ENCODE measurements at regions of chr12 and their contacts with region 1.

Region 1: GRCh38 chr12:2794736-2795289 is at the start of gene FKBP4:
- DNase-seq: peak; percentile 65 to 95
- H3K4me3 ChIP-seq: peak within 1 kb of the TSS; percentile 82 to 84
- H3K27ac ChIP-seq: peak within 1 kb of the TSS; percentile 64 to 88
- H3K4me1 ChIP-seq: peaks cover 13 to 19% of the 10 kb centered on the region in 2 donors
- H3K27me3 ChIP-seq: no peaks in the 10 kb centered on the region
- CTCF ChIP-seq: no peak
- total RNA-seq, gene FKBP4: 36.3 TPM

Region 2: GRCh38 chr12:2636741-2637340 is 158.0 kb before region 1 on chr12:
- intact Hi-C with region 1: no loop called
- DNase-seq: no peak
- H3K4me3 ChIP-seq: no peak overlapping the region
- H3K27ac ChIP-seq: peak overlapping the region; percentile 61 to 69
- H3K4me1 ChIP-seq: peaks cover 12 to 22% of the 10 kb centered on the region in 2 donors
- H3K27me3 ChIP-seq: no peaks in the 10 kb centered on the region
- CTCF ChIP-seq: no peak

Region 3: GRCh38 chr12:2812290-2813213 is 17.7 kb after region 1 on chr12 and contains the start of gene ITFG2:
- intact Hi-C with region 1: loop called (anchors 2 kb)
- DNase-seq: peak; percentile 96 to 99
- H3K4me3 ChIP-seq: peak within 1 kb of the TSS; percentile 83 to 85
- H3K27ac ChIP-seq: peak within 1 kb of the TSS; percentile 88 to 90
- H3K4me1 ChIP-seq: peaks cover 0 to 14% of the 10 kb centered on the region in 2 donors
- H3K27me3 ChIP-seq: no peaks in the 10 kb centered on the region
- CTCF ChIP-seq: no peak
- total RNA-seq, gene ITFG2: 19.9 TPM

Region 4: GRCh38 chr12:3073438-3074250 is 278.8 kb after region 1 on chr12:
- intact Hi-C with region 1: no loop called
- DNase-seq: peak in 1 of 2 donors; percentile 92
- H3K4me3 ChIP-seq: no peak overlapping the region
- H3K27ac ChIP-seq: peak overlapping the region; percentile 47 to 65
- H3K4me1 ChIP-seq: peaks cover 6 to 23% of the 10 kb centered on the region in 2 donors
- H3K27me3 ChIP-seq: no peaks in the 10 kb centered on the region
- CTCF ChIP-seq: peak; percentile 74 to 98 (median 97)

Region 5: DNA sequence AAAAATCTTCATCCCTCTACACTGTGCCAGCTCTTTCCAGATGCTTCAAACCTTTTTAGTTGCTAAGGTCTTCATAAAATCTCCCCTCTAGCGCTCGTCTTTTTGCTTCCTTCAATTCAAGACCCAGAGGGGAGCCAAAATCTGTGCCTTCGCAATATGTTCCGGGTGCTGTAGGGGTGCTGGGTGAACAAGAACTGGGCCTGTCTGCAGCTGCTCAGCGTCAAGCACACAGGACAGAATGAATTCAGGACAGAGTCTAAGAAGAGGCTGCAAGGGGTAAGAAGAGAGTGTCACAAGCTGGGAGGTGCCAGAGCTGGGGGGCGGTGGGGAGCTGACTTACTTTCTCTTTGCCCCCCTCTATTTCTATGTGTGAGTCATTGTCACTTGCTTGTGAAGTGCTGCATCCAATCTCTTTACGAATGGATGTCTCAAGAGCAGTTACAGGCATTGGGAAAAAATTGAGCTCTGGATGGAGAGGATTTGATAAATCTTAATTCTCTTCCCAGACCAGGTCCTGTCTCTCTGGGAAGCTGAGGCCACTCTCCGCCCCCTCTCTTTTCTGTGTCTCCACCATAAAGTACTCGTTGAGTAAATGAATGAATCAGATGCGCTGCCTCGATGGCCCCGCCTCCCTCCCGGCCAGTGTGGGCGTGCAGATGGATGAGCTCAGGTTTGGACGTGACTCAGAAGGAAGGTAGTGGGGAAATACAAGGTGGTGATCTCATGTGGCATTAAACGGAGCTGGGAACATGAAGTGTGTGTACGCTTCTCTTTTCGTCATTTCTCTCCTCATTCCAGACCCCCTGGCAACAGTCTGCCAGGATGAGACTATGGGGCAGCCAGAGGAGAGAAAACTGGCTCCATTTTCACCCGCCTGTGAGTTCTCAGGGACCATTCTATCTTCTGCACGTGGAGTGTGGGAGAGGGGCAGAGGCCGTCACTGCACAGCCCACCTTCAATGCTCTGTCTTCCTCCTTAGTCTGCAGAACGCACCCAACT is 373.7 kb after region 1 on chr12:
- intact Hi-C with region 1: no loop called
- DNase-seq: no peak
- H3K4me3 ChIP-seq: no peak overlapping the region
- H3K27ac ChIP-seq: no peak overlapping the region
- H3K4me1 ChIP-seq: no peaks in the 10 kb centered on the region
- H3K27me3 ChIP-seq: no peaks in the 10 kb centered on the region
- CTCF ChIP-seq: no peak

Measured in ascending aorta (tissue), 2 donors.